ENCODE measurements at regions of chr4 and their contacts with region 1.

Region 1: DNA sequence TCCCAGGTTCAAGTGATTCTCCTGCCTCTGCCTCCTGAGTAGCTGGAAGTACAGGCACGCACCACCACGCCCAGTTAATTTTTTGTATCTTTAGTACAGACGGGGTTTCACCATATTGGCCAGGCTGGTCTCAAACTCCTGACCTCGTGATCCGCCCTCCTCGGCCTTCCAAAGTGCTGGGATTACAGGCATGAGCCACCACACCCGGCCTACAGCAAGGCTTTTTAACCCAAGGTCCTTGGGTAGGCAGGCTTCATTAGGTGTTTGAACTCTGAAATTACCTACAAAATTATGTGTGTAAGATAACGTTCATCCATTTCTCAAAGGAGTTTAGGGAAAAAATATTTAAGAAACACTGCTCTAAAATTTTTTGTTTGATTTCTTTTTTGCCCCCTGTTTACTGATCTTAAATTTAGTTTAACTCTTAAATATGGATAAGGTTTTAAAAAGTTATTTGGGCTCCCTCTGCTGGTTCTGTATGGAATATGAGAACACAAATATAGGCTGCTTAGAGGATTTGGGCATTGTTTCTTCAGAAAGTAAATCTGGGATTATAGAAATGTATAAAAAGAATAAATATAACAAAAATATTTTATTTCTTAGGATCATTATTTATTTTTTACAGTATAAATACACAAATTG is 92.8 kb downstream of the CBR4 start:
- DNase-seq: peak; percentile 36
- CTCF ChIP-seq: peak; percentile 57

Region 2: DNA sequence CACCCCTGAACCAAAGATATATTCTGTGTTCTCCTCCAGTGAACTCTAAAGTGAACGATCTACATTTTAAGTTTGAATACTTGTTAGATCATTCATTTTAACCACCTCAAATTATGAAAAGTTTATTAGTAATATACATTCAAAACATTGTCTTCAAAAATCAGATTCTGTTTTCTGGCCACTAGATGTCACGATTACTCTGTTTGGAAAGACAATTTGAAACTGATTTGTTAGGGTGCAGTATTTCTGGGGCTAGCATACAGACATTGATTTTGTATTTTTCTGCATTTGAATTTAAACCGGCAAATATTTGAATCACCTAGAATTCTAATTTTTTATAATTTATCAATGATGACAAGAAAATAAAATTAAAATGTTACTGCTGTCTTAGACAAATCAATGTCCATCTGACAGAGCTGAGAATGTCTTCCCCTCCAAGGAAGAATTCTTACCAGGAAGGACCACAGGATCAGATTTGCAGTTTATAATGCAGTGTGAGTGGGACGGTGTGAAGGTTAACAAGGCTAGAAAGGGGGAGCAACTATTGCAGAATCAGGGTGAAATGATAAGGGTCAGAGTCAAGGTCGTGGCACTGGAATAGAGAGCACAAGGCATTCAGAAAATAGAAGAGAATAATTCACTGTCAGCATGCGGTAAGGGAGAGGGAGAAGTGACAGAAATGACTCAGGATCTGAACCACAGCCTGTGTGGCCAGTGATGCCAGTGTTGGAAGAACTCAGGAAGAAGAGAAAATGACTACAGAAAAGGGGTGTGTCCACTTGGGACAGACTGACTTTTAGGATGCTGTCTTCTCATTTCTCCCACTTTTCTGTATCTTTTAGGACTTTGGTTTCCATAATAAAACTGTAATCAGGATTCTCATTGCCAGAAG is 733.3 kb before region 1 on chr4:
- in situ Hi-C with region 1: loop called (anchors 5 kb)
- DNase-seq: peak; percentile 56
- CTCF ChIP-seq: peak; percentile 59

Region 3: GRCh38 chr4:169040559-169041261 is 123.5 kb after region 1 on chr4:
- in situ Hi-C with region 1: no loop called
- DNase-seq: no peak
- CTCF ChIP-seq: no peak

Measured in GM13977 (cell line).